ENCODE measurements at regions of chr7 and their contacts with region 1.

Region 1: GRCh38 chr7:55515569-55516279 is 56.6 kb downstream of the VOPP1 start:
- DNase-seq: no peak
- H3K4me3 Mint-ChIP-seq: peak overlapping the region; percentile 5
- H3K27ac Mint-ChIP-seq: peak overlapping the region; percentile 56
- H3K4me1 Mint-ChIP-seq: peaks cover 47% of the 10 kb centered on the region
- H3K27me3 Mint-ChIP-seq: no peaks in the 10 kb centered on the region

Region 2: GRCh38 chr7:55309040-55309991 is 206.4 kb before region 1 on chr7:
- intact Hi-C with region 1: loop called (anchors 5 kb)
- DNase-seq: peak; percentile 82
- H3K4me3 Mint-ChIP-seq: peak overlapping the region; percentile 41
- H3K27ac Mint-ChIP-seq: peak overlapping the region; percentile 87
- H3K4me1 Mint-ChIP-seq: peaks cover 27% of the 10 kb centered on the region
- H3K27me3 Mint-ChIP-seq: peaks cover 4% of the 10 kb centered on the region

Region 3: DNA sequence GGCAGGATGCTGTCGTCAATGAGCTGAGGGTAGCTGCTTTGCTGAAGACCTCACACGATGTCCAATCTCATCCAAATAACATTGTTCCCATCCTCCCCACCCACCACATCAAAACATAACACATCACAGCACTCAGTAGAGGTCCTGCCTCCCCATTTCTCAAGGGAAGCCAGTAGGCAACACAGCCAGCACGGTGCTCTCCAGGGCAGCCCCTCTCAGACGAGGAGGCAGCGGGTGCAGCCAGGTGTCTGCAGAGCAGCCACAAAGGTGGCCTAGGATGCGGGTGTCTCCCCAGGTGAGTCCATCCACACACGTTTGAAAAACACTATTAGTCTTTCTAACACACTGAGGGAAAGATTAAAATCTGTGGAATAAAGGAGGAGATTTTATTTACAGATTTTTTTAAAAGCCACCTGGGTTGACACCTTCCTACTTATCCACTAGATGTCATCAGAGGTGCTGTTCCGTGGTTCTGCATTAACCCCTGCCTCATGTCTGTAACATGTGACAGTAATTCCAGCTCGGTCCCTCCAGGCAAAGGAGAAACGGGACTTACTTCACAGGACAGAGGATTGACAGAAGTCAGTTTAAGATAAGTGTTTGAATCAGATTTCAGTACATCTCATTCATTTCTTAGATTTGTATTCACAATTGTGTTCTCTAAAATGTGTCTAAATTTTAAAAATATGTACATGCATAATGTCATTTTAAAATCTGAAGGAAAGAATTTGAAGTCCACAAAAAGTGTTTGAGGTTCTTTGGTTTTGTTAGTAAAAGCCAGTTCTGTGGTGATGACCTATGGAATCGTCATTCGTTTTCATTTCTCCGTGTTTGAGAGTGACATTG is 82.6 kb before region 1 on chr7:
- intact Hi-C with region 1: loop called (anchors 5 kb)
- DNase-seq: peak; percentile 75
- H3K4me3 Mint-ChIP-seq: no peak overlapping the region
- H3K27ac Mint-ChIP-seq: peak overlapping the region; percentile 12
- H3K4me1 Mint-ChIP-seq: peaks cover 14% of the 10 kb centered on the region
- H3K27me3 Mint-ChIP-seq: no peaks in the 10 kb centered on the region

Region 4: DNA sequence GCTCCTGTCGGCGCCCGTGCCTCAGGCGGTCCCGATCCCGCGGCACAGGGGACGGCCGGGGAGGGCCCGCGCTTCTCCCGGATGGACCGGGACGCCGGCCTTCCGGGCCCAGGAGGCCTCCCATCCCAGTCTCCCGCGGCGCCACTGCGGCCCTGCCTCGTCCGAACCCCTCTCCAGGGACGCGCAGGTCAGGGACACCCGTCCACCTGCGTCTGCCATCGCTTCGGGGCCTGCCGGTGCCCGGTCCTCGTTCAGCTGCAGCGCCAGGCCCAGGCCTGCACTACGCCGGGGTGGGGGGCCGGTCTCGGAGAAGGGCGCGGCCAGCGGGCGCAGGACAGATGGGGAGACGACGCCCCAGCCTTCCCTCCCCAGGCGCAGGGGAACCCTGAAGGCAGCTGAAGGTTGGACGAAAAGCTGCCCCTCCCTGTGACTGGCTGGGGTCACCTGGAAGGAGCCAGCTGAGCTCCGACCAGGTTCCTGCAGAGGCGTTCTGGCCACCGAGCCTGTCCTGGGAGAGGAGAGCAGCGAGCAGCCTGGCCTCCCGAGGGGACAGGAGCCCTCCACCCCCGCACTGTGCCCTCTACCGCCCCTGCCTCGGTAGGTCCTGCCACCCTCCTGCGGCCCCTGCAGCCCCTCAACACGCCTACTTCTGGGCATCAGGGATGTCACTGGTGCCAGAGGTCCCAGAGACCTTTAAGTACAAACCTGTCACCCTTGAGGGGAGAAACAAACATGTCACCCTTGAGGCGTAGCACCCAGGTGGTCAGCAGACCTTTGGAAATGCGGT is 66.3 kb before region 1 on chr7:
- intact Hi-C with region 1: no loop called
- DNase-seq: no peak
- H3K4me3 Mint-ChIP-seq: no peak overlapping the region
- H3K27ac Mint-ChIP-seq: no peak overlapping the region
- H3K4me1 Mint-ChIP-seq: peaks cover 10% of the 10 kb centered on the region
- H3K27me3 Mint-ChIP-seq: no peaks in the 10 kb centered on the region

Measured in activated CD4-positive, alpha-beta T cell treated with anti-CD3 and anti-CD28 coated beads, Interleukin-2, amount 10 ng/mL, durations not matched to agents 24 days and 14 days (primary cell).